ENCODE measurements at regions of chr14 and their contacts with region 1.

Region 1: GRCh38 chr14:100654814-100655740 is 67.9 kb upstream of the BEGAIN start:
- DNase-seq: peak in 8 of 9 donors; percentile 23 to 58 (median 42)
- ATAC-seq: peak; percentile 79
- H3K4me3 ChIP-seq: no peak overlapping the region
- H3K4me3 Mint-ChIP-seq: peak overlapping the region in 1 of 10 donors; percentile 52
- H3K27ac ChIP-seq: no peak overlapping the region
- H3K27ac Mint-ChIP-seq: no peak overlapping the region
- H3K4me1 ChIP-seq: peaks cover 0 to 4% of the 10 kb centered on the region in 2 donors
- H3K4me1 Mint-ChIP-seq: peaks cover 0 to 4% (median 0%) of the 10 kb centered on the region in 7 donors
- H3K27me3 ChIP-seq: no peaks in the 10 kb centered on the region
- H3K27me3 Mint-ChIP-seq: peaks cover 5 to 32% (median 16%) of the 10 kb centered on the region in 5 donors

Region 2: DNA sequence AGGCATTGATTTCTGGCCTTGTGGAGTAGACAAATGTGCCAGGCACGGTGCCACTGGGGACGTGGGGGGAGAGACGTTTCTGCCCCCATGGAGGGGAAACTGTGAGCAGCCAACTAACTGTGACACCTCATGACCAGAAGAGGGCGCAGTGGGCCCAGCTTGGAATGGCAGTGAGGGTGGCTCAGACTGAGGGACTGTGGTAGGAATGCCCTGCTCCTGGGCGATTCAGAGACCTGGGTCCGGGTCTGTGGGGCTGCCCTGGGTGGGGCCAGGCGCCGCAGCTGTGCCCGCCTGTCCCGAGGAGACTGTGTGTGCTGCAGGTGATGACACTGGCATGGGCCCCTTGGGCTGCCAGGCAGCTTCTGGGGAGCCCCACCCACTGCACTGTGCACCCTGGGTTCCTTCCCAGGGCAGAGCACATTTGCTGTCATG is 271.3 kb before region 1 on chr14:
- CTCF ChIA-PET with region 1: interaction called, 15 read pairs
- POLR2A ChIA-PET with region 1: no interaction called
- intact Hi-C with region 1: loop called (anchors 1 kb)
- DNase-seq: peak; percentile 39 to 71 (median 55)
- ATAC-seq: peak; percentile 92
- H3K4me3 ChIP-seq: no peak overlapping the region
- H3K4me3 Mint-ChIP-seq: no peak overlapping the region
- H3K27ac ChIP-seq: no peak overlapping the region
- H3K27ac Mint-ChIP-seq: peak overlapping the region in 1 of 9 donors; percentile 75
- H3K4me1 ChIP-seq: peaks cover 0 to 11% of the 10 kb centered on the region in 2 donors
- H3K4me1 Mint-ChIP-seq: peaks cover 4 to 26% (median 21%) of the 10 kb centered on the region in 7 donors
- H3K27me3 ChIP-seq: no peaks in the 10 kb centered on the region
- H3K27me3 Mint-ChIP-seq: no peaks in the 10 kb centered on the region

Region 3: GRCh38 chr14:100440187-100440631 is 214.9 kb before region 1 on chr14:
- CTCF ChIA-PET with region 1: interaction called, 3 read pairs
- POLR2A ChIA-PET with region 1: no interaction called
- intact Hi-C with region 1: loop called in 1 of 2 experiments (anchors 1 kb)
- DNase-seq: peak in 7 of 9 donors; percentile 5 to 66 (median 30)
- ATAC-seq: peak; percentile 26
- H3K4me3 ChIP-seq: no peak overlapping the region
- H3K4me3 Mint-ChIP-seq: no peak overlapping the region
- H3K27ac ChIP-seq: no peak overlapping the region
- H3K27ac Mint-ChIP-seq: peak overlapping the region in 2 of 9 donors; percentile 62 to 63
- H3K4me1 ChIP-seq: no peaks in the 10 kb centered on the region
- H3K4me1 Mint-ChIP-seq: peaks cover 3 to 38% (median 18%) of the 10 kb centered on the region in 7 donors
- H3K27me3 ChIP-seq: no peaks in the 10 kb centered on the region
- H3K27me3 Mint-ChIP-seq: no peaks in the 10 kb centered on the region

Region 4: GRCh38 chr14:100498068-100498467 is 157.0 kb before region 1 on chr14:
- CTCF ChIA-PET with region 1: no interaction called
- POLR2A ChIA-PET with region 1: no interaction called
- intact Hi-C with region 1: no loop called
- DNase-seq: no peak
- ATAC-seq: no peak
- H3K4me3 ChIP-seq: no peak overlapping the region
- H3K4me3 Mint-ChIP-seq: no peak overlapping the region
- H3K27ac ChIP-seq: no peak overlapping the region
- H3K27ac Mint-ChIP-seq: no peak overlapping the region
- H3K4me1 ChIP-seq: no peaks in the 10 kb centered on the region
- H3K4me1 Mint-ChIP-seq: peaks cover 0 to 7% (median 3%) of the 10 kb centered on the region in 7 donors
- H3K27me3 ChIP-seq: no peaks in the 10 kb centered on the region
- H3K27me3 Mint-ChIP-seq: peaks cover 0 to 14% (median 0%) of the 10 kb centered on the region in 5 donors

Region 5: GRCh38 chr14:100524933-100525243 is 130.2 kb before region 1 on chr14:
- CTCF ChIA-PET with region 1: interaction called, 4 read pairs
- POLR2A ChIA-PET with region 1: no interaction called
- intact Hi-C with region 1: loop called in 1 of 2 experiments (anchors 1 kb)
- DNase-seq: peak in 1 of 9 donors; percentile 20
- ATAC-seq: peak; percentile 41
- H3K4me3 ChIP-seq: no peak overlapping the region
- H3K4me3 Mint-ChIP-seq: no peak overlapping the region
- H3K27ac ChIP-seq: no peak overlapping the region
- H3K27ac Mint-ChIP-seq: no peak overlapping the region
- H3K4me1 ChIP-seq: no peaks in the 10 kb centered on the region
- H3K4me1 Mint-ChIP-seq: no peaks in the 10 kb centered on the region
- H3K27me3 ChIP-seq: no peaks in the 10 kb centered on the region
- H3K27me3 Mint-ChIP-seq: peaks cover 0 to 3% (median 0%) of the 10 kb centered on the region in 5 donors

Region 6: DNA sequence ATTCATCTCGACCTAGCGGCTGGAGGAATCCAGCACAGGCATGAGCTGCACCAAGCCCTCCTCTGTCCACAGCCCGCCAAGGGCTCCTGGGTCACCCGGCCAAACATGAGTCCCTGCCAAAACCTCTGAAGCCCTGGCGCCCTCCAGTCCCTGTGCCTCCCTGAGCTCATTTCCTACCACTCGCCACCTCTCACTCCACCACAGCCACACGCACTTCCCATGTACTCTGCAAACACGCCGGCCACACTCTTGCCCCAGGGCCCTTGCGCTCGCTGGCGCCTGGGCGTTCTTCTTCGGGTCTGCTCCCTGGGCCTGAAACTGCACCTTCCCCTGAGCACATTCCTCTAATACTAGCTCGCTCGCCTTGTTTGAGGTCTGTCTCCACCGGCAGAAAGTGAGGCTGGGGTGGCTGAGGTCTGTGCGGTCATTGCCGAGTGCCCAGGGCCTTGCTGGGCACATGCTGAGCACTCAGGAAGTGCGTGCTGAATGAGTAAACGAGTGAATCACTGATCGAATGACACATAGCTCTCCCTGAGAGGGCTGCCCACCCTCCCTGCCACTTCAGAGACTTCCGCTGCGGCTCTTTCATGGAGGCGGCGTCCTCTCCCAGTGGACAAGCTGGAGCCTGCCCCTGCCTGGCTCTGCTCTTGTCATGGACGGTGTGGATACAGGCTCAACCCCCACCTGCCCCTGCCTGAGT is 37.9 kb after region 1 on chr14:
- CTCF ChIA-PET with region 1: no interaction called
- POLR2A ChIA-PET with region 1: no interaction called
- intact Hi-C with region 1: no loop called
- DNase-seq: no peak
- ATAC-seq: peak; percentile 37
- H3K4me3 ChIP-seq: no peak overlapping the region
- H3K4me3 Mint-ChIP-seq: no peak overlapping the region
- H3K27ac ChIP-seq: no peak overlapping the region
- H3K27ac Mint-ChIP-seq: no peak overlapping the region
- H3K4me1 ChIP-seq: no peaks in the 10 kb centered on the region
- H3K4me1 Mint-ChIP-seq: peaks cover 0 to 3% (median 0%) of the 10 kb centered on the region in 7 donors
- H3K27me3 ChIP-seq: no peaks in the 10 kb centered on the region
- H3K27me3 Mint-ChIP-seq: peaks cover 0 to 48% (median 5%) of the 10 kb centered on the region in 5 donors

Measured in naive thymus-derived CD4-positive, alpha-beta T cell (primary cell).